Activated CD4-positive, alpha-beta memory T cell treated with anti-CD3 and anti-CD28 coated beads, Interleukin-2, amount 10 ng/mL, durations not matched to agents 7 days and 5 days (primary cell): ENCODE measurements at regions of chr1 and their contacts with region 1.

Region 1: GRCh38 chr1:110619412-110620249 is 13.5 kb upstream of the KCNA2 start:
- DNase-seq: peak; percentile 93
- H3K4me3 Mint-ChIP-seq: peak overlapping the region; percentile 74
- H3K27ac Mint-ChIP-seq: peak overlapping the region; percentile 83
- H3K4me1 Mint-ChIP-seq: peaks cover 60% of the 10 kb centered on the region
- H3K27me3 Mint-ChIP-seq: no peaks in the 10 kb centered on the region

Region 2: GRCh38 chr1:110605901-110606656 is 13.6 kb before region 1 on chr1 and contains the start of gene KCNA2:
- CTCF ChIA-PET with region 1: interaction called, 18 read pairs
- POLR2A ChIA-PET with region 1: interaction called, 9 read pairs
- DNase-seq: peak; percentile 15
- H3K4me3 Mint-ChIP-seq: peak within 1 kb of the TSS; percentile 68
- H3K27ac Mint-ChIP-seq: no peak within 1 kb of the TSS
- H3K4me1 Mint-ChIP-seq: peaks cover 41% of the 10 kb centered on the region
- H3K27me3 Mint-ChIP-seq: peaks cover 43% of the 10 kb centered on the region
- total RNA-seq, gene KCNA2: 5.9 to 6.6 TPM

Region 3: DNA sequence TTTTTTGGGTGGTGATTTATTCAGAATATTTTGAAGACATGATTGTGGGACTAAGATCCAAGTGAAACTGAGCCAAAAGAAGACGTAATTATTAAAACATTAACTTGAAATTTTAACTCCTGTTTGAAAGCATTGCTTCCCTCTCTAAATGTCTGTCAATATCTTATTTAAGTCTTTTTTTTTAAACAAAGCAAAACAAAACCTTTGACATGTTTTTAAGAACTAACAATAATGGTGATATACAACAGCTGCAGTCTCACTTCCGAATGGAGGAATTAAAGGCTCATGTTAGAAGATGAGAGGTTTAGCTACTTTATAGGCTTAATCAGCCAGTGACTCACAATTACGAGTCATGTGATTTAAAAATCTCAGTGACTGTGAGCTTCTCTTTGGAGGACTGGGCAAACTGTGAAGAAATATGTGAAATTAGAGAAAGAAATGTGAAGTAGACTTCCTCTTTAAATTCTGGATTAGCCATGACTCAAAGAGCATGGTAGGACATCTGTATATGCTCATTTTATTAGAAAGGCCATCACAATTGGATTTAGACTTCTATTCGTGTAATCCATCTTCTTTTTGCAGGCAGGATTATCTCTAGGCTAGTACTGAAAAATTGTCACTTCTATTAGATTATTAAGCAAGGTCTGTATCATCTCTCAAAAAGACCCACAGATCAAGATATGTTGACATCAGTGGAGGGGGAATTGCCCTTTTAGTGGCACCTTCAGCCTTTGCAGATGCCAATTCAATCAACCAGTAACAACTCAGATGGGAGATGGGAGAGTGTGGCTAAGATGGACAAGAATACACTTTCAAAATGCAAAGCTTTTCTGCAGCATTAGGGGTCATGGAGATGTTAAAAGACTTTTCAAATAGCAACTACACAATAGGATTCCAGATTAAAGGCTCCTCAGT is 26.4 kb after region 1 on chr1:
- CTCF ChIA-PET with region 1: interaction called, 56 read pairs
- POLR2A ChIA-PET with region 1: interaction called, 52 read pairs
- DNase-seq: no peak
- H3K4me3 Mint-ChIP-seq: peak overlapping the region; percentile 1
- H3K27ac Mint-ChIP-seq: no peak overlapping the region
- H3K4me1 Mint-ChIP-seq: peaks cover 47% of the 10 kb centered on the region
- H3K27me3 Mint-ChIP-seq: no peaks in the 10 kb centered on the region

Region 4: DNA sequence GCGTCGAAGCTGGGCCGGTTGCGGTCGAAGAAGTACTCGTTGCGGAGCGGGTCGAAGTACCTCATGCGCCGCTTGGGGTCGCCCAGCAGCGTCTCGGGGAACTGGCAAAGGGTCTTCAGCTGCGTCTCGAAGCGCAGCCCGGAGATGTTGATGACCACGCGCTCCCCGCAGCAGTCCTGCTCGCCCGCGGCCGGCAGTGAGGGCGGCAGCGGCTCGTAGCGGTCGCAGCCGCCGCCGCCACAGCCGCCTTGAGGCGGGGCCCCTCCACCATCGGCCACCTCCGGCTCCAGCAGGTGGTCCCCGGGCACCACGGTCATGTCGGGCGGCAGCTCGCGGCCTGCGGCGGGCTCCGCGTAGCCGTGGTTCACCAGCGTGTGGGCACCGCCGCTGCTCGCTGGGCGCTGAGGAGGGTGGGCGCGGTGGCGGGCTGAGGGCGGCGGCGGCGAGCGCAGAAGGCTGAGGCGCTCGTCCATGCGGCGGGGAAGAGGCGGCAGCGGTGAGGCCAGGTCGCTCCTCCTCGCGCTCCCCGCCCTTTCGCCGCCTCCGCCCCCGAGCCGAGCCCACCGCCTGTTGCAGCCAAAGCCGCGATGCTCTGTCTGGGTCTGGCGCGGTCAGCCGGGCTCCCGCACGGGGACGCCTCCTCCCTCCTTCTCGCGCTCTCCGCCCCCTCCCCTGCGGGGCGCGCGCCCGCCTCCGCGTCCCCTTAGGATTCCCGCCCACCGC is 54.9 kb after region 1 on chr1 and contains the start of gene KCNA3:
- CTCF ChIA-PET with region 1: interaction called, 40 read pairs
- POLR2A ChIA-PET with region 1: interaction called, 92 read pairs
- DNase-seq: peak; percentile 74
- H3K4me3 Mint-ChIP-seq: peak within 1 kb of the TSS; percentile 100
- H3K27ac Mint-ChIP-seq: peak within 1 kb of the TSS; percentile 89
- H3K4me1 Mint-ChIP-seq: peaks cover 28% of the 10 kb centered on the region
- H3K27me3 Mint-ChIP-seq: no peaks in the 10 kb centered on the region
- total RNA-seq, gene KCNA3: 84.9 to 86.2 TPM

Region 5: GRCh38 chr1:110766025-110766647 is 146.5 kb after region 1 on chr1:
- CTCF ChIA-PET with region 1: interaction called, 158 read pairs
- POLR2A ChIA-PET with region 1: interaction called, 66 read pairs
- DNase-seq: peak; percentile 66
- H3K4me3 Mint-ChIP-seq: no peak overlapping the region
- H3K27ac Mint-ChIP-seq: no peak overlapping the region
- H3K4me1 Mint-ChIP-seq: peaks cover 9% of the 10 kb centered on the region
- H3K27me3 Mint-ChIP-seq: peaks cover 19% of the 10 kb centered on the region